ENCODE measurements at regions of chr6 and their contacts with region 1.

Region 1: GRCh38 chr6:68343901-68344300 is 291.2 kb upstream of the ADGRB3 start:
- DNase-seq: no peak
- H3K4me3 ChIP-seq: no peak overlapping the region
- H3K27ac ChIP-seq: no peak overlapping the region
- H3K4me1 ChIP-seq: no peaks in the 10 kb centered on the region
- H3K27me3 ChIP-seq: no peaks in the 10 kb centered on the region
- CTCF ChIP-seq: peak in 3 of 5 experiments; percentile 9 to 30 (median 14)
- EP300 ChIP-seq: no peak
- POLR2A ChIP-seq: no peak

Region 2: DNA sequence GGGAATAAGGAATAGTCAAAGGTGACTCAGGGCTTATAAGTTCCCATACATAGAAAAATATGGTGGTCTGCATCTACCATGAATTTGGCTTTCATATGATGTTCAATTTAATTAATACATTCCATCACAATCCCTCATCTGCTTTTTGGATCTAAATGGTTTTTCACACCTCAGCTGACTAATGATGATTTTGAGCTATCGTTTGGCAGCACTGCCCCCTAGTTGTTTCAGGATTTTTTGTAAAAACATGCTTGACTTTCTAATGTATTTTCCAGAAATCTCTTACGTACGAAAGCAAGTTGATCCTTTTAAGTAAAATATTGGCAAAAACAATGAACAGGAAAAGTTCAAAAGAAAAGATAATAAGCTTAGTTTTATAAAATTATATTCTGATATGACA is 117.4 kb before region 1 on chr6:
- in situ Hi-C with region 1: no loop called
- intact Hi-C with region 1: no loop called
- DNase-seq: no peak
- H3K4me3 ChIP-seq: no peak overlapping the region
- H3K27ac ChIP-seq: no peak overlapping the region
- H3K4me1 ChIP-seq: no peaks in the 10 kb centered on the region
- H3K27me3 ChIP-seq: no peaks in the 10 kb centered on the region
- CTCF ChIP-seq: no peak
- EP300 ChIP-seq: no peak
- POLR2A ChIP-seq: no peak

Region 3: GRCh38 chr6:68941345-68941744 is 597.4 kb after region 1 on chr6:
- in situ Hi-C with region 1: no loop called
- intact Hi-C with region 1: loop called (anchors 10 kb)
- DNase-seq: no peak
- H3K4me3 ChIP-seq: no peak overlapping the region
- H3K27ac ChIP-seq: no peak overlapping the region
- H3K4me1 ChIP-seq: no peaks in the 10 kb centered on the region
- H3K27me3 ChIP-seq: no peaks in the 10 kb centered on the region
- CTCF ChIP-seq: no peak
- EP300 ChIP-seq: no peak
- POLR2A ChIP-seq: no peak

Measured in transverse colon (tissue), 4 donors.